ENCODE measurements at regions of chr1 and their contacts with region 1.

Region 1: GRCh38 chr1:27044613-27045151 is 32.0 kb upstream of the TENT5B start:
- DNase-seq: peak; percentile 77
- H3K4me3 ChIP-seq: no peak overlapping the region
- H3K27ac ChIP-seq: no peak overlapping the region
- H3K4me1 ChIP-seq: peaks cover 5% of the 10 kb centered on the region
- H3K27me3 ChIP-seq: no peaks in the 10 kb centered on the region
- CTCF ChIP-seq: peak; percentile 95 to 96
- POLR2A ChIP-seq: no peak

Region 2: DNA sequence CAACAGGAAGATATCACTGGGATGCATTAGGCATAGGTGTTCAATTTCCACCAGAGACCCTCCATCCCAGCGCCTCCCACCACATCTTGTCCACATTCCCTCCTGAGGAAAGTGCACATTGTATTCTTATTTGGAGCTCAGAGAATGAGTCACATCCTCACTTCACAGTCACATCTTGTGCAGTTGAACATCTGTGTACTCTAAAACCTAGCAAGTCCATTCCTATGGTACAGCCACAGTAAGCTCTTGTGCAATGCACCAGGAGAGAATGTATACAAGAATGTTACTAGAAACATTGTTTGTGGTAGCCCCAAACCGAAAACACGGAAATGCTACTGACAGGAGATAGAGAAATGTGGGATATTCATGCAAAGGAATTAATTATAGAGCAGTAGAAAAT is 82.9 kb before region 1 on chr1:
- CTCF ChIA-PET with region 1: interaction called, 50 read pairs
- POLR2A ChIA-PET with region 1: no interaction called
- dilution Hi-C with region 1: no loop called
- intact Hi-C with region 1: loop called (anchors 1 kb)
- DNase-seq: peak; percentile 70
- H3K4me3 ChIP-seq: no peak overlapping the region
- H3K27ac ChIP-seq: no peak overlapping the region
- H3K4me1 ChIP-seq: peaks cover 16% of the 10 kb centered on the region
- H3K27me3 ChIP-seq: peaks cover 22 to 24% of the 10 kb centered on the region in 2 experiments
- CTCF ChIP-seq: no peak
- POLR2A ChIP-seq: no peak

Region 3: GRCh38 chr1:27021354-27022031 is 23.2 kb before region 1 on chr1:
- CTCF ChIA-PET with region 1: interaction called, 25 read pairs
- POLR2A ChIA-PET with region 1: no interaction called
- dilution Hi-C with region 1: no loop called
- intact Hi-C with region 1: no loop called
- DNase-seq: peak; percentile 76
- H3K4me3 ChIP-seq: no peak overlapping the region
- H3K27ac ChIP-seq: no peak overlapping the region
- H3K4me1 ChIP-seq: peaks cover 7% of the 10 kb centered on the region
- H3K27me3 ChIP-seq: no peaks in the 10 kb centered on the region
- CTCF ChIP-seq: no peak
- POLR2A ChIP-seq: no peak

Region 4: GRCh38 chr1:27071049-27071416 is 26.4 kb after region 1 on chr1:
- CTCF ChIA-PET with region 1: interaction called, 21 read pairs
- POLR2A ChIA-PET with region 1: no interaction called
- dilution Hi-C with region 1: no loop called
- intact Hi-C with region 1: no loop called
- DNase-seq: no peak
- H3K4me3 ChIP-seq: no peak overlapping the region
- H3K27ac ChIP-seq: no peak overlapping the region
- H3K4me1 ChIP-seq: no peaks in the 10 kb centered on the region
- H3K27me3 ChIP-seq: no peaks in the 10 kb centered on the region
- CTCF ChIP-seq: no peak
- POLR2A ChIP-seq: no peak

Region 5: GRCh38 chr1:27097484-27097917 is 52.8 kb after region 1 on chr1:
- CTCF ChIA-PET with region 1: interaction called, 582 read pairs
- POLR2A ChIA-PET with region 1: no interaction called
- dilution Hi-C with region 1: no loop called
- intact Hi-C with region 1: loop called (anchors 1 kb)
- DNase-seq: peak; percentile 64
- H3K4me3 ChIP-seq: no peak overlapping the region
- H3K27ac ChIP-seq: no peak overlapping the region
- H3K4me1 ChIP-seq: no peaks in the 10 kb centered on the region
- H3K27me3 ChIP-seq: no peaks in the 10 kb centered on the region
- CTCF ChIP-seq: peak; percentile 89 to 91
- POLR2A ChIP-seq: no peak

Region 6: DNA sequence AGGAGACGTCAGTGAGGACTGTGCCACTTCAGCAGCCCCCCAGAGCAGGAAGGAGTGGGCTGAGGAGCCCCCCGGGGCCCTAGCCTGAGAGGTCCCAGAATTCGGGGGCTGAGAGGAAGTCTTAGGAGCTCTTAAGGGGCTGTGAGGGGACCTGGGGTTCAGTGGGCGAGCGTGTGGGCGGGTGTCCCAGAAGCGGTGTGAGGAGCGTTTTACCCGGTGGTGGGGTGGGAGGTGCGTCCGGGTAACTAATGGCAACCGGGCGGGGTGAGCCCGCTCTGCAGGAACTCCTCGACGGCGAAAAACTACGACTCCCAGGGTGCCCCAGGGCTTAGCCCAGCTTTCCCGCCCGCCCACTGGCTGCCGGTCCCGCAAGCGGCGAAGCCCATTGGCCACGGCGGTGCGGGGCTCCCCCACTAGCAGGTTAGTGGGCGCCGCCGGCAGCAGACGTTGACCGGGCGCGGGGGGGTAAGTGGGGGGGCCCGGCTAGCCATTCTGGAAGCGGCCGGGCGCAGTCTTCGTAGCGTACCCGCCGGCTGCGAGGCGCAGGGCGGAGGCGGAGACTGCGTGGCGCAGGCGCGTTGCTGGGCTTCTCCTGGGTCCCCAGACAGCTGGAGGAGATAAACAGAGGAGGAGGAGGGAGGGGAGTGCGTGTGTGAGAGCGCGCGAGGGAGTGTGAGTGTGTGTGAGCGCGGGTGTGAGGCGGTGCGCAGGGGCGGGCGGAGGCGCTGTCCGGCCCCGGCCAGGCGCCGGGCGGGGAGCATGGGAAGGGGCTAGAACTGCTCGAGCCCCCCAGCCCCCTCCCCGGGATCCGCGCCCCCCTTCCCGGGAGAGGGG is 189.6 kb after region 1 on chr1 and contains the start of gene WDTC1:
- CTCF ChIA-PET with region 1: no interaction called
- POLR2A ChIA-PET with region 1: no interaction called
- dilution Hi-C with region 1: loop called (anchors 25 kb)
- intact Hi-C with region 1: no loop called
- DNase-seq: peak; percentile 98
- H3K4me3 ChIP-seq: peak within 1 kb of the TSS; percentile 61 to 87 (median 76)
- H3K27ac ChIP-seq: no peak within 1 kb of the TSS
- H3K4me1 ChIP-seq: peaks cover 12% of the 10 kb centered on the region
- H3K27me3 ChIP-seq: no peaks in the 10 kb centered on the region
- CTCF ChIP-seq: no peak
- POLR2A ChIP-seq: peak; percentile 28
- total RNA-seq, gene WDTC1: 27.3 and 27.6 TPM in 2 replicates

Region 7: DNA sequence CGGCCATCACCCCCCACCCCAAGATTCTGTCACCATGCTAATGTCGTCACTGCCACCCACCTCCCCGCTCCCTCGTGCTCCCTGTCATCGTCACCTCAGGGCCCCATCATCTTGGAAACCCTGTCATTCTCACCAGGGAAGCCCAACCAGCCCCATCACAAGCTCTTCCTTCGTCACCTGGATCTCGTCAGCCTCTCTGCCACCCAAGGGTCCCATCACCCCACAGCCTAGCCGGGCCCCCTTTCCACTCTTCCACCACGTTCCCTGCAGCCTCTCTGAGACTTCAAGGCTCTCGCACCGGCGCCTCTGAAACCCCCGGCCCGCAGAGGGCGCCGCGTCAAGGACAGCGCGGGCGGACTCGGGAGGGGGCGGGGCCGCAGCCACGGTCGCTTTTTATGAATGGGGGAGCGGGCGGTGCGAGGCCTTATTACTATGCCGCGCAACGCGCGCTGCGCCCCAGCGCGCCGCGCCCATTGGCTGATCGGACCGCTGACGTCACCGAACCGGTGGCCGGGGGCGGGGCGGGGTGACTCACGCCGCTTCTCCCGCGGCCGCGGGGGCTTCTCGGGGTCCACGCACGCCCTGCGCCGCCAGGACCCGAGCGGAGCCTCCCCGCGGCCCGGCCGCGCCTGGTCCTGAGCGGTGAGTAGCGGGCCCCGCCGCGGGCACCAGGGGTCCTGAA is 347.6 kb after region 1 on chr1 and contains the start of gene GPR3:
- CTCF ChIA-PET with region 1: interaction called, 14 read pairs
- POLR2A ChIA-PET with region 1: no interaction called
- dilution Hi-C with region 1: no loop called
- intact Hi-C with region 1: loop called (anchors 5 kb)
- DNase-seq: peak; percentile 93
- H3K4me3 ChIP-seq: peak within 1 kb of the TSS; percentile 46 to 80 (median 70)
- H3K27ac ChIP-seq: peak within 1 kb of the TSS; percentile 73
- H3K4me1 ChIP-seq: peaks cover 21% of the 10 kb centered on the region
- H3K27me3 ChIP-seq: no peaks in the 10 kb centered on the region
- CTCF ChIP-seq: peak; percentile 66 to 72
- POLR2A ChIP-seq: no peak
- total RNA-seq, gene GPR3: 1.8 and 2.4 TPM in 2 replicates

Measured in endothelial cell of umbilical vein (primary cell).